ENCODE measurements at regions of chr22 and their contacts with region 1.

Region 1: DNA sequence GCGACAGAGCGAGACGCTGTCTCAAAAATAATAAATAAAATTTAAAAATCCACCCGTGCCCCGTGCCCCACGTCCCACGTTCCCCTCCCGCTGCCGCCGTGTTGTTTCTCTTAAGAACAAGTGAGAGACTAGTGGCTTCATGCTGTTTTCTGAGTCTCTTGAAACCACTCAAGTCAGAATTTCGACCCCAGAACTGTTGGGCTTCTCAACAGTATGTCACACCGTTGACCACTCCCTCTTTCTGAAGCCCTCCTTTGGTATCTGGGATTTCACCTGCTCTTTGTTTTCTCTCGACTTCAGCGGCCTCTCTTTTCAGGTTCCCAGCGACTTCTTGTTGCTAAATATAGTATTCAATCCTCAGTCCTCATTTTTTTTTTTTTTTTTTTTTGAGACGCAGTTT is 974 bp downstream of the PPIL2 start:
- DNase-seq: no peak
- ATAC-seq: no peak
- H3K4me3 Mint-ChIP-seq: peak overlapping the region; percentile 99
- H3K27ac Mint-ChIP-seq: peak overlapping the region; percentile 50
- H3K4me1 Mint-ChIP-seq: peaks cover 25% of the 10 kb centered on the region
- H3K27me3 Mint-ChIP-seq: no peaks in the 10 kb centered on the region
- CTCF ChIP-seq: no peak

Region 2: GRCh38 chr22:21735200-21736076 is 68.7 kb after region 1 on chr22 and contains the start of gene YPEL1:
- CTCF ChIA-PET with region 1: no interaction called
- POLR2A ChIA-PET with region 1: interaction called, 3 read pairs
- intact Hi-C with region 1: loop called (anchors 1 kb)
- DNase-seq: peak; percentile 97
- ATAC-seq: peak; percentile 87
- H3K4me3 Mint-ChIP-seq: peak within 1 kb of the TSS; percentile 93
- H3K27ac Mint-ChIP-seq: peak within 1 kb of the TSS; percentile 96
- H3K4me1 Mint-ChIP-seq: peaks cover 42% of the 10 kb centered on the region
- H3K27me3 Mint-ChIP-seq: no peaks in the 10 kb centered on the region
- CTCF ChIP-seq: no peak
- total RNA-seq, gene YPEL1: 3.0 and 4.1 TPM in 2 replicates

Region 3: DNA sequence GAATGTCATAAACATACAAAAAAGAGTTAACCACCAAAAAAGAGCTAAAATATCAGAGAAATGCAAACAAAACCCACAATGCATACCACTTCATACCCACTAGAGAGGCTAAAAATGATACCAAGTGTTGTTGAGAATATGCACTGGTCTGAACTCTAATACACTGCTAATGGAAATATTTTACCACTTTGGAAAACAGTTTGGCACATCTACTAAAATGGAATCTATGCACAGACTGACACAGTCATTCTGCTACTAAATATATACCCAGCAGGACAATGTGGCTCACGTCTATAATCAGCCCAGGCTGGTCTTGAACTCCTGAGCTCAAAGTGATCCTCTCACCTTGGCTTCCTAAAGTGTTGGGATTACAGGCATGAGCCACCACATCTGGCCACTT is 182.7 kb after region 1 on chr22:
- CTCF ChIA-PET with region 1: no interaction called
- POLR2A ChIA-PET with region 1: no interaction called
- intact Hi-C with region 1: no loop called
- DNase-seq: no peak
- ATAC-seq: no peak
- H3K4me3 Mint-ChIP-seq: no peak overlapping the region
- H3K27ac Mint-ChIP-seq: no peak overlapping the region
- H3K4me1 Mint-ChIP-seq: peaks cover 72% of the 10 kb centered on the region
- H3K27me3 Mint-ChIP-seq: no peaks in the 10 kb centered on the region
- CTCF ChIP-seq: no peak

Measured in activated B cell treated with CpG ODN at 0.5 μM for 24 hours (primary cell).